ENCODE measurements at regions of chr5 and their contacts with region 1.

Region 1: GRCh38 chr5:171913987-171914273 is 92.5 kb downstream of the FBXW11 start:
- DNase-seq: no peak
- H3K4me3 Mint-ChIP-seq: no peak overlapping the region
- H3K27ac Mint-ChIP-seq: no peak overlapping the region
- H3K4me1 Mint-ChIP-seq: peaks cover 57% of the 10 kb centered on the region
- H3K27me3 Mint-ChIP-seq: no peaks in the 10 kb centered on the region

Region 2: DNA sequence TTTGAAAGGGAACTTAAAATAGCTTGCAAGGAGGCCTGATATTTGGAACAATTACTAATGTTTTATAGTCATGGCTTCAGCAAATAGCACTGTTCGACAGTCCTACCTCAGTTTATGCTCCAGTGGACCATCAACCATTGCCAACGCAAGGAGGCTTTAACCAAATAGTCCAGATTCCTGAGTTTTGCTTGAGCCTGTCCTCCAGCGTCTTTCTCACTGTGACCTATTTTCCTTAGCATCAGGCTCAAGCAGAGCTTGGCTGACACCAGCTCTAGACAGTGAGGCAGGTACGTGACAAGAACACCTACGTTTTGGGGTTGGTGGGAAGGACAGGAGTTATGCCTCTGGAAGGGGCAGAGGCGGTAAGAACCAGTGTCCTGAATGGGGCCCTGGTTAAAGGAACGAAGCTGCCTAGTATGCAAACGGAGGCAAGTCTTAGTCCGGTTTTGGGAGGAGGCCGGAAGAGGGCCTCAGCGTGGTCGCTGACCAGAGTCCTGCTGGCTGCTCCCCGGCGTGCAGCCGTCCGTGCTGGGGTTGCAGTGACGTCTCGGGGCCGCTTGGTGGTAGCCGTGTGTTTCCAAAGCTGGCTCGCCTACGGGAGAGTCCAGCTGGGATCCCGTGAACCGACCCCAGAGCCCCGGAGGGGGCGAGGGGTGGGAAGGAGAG is 495.5 kb before region 1 on chr5:
- CTCF ChIA-PET with region 1: interaction called, 10 read pairs
- intact Hi-C with region 1: no loop called
- DNase-seq: peak; percentile 71
- H3K4me3 Mint-ChIP-seq: peak overlapping the region; percentile 53
- H3K27ac Mint-ChIP-seq: no peak overlapping the region
- H3K4me1 Mint-ChIP-seq: peaks cover 13% of the 10 kb centered on the region
- H3K27me3 Mint-ChIP-seq: peaks cover 25% of the 10 kb centered on the region

Region 3: DNA sequence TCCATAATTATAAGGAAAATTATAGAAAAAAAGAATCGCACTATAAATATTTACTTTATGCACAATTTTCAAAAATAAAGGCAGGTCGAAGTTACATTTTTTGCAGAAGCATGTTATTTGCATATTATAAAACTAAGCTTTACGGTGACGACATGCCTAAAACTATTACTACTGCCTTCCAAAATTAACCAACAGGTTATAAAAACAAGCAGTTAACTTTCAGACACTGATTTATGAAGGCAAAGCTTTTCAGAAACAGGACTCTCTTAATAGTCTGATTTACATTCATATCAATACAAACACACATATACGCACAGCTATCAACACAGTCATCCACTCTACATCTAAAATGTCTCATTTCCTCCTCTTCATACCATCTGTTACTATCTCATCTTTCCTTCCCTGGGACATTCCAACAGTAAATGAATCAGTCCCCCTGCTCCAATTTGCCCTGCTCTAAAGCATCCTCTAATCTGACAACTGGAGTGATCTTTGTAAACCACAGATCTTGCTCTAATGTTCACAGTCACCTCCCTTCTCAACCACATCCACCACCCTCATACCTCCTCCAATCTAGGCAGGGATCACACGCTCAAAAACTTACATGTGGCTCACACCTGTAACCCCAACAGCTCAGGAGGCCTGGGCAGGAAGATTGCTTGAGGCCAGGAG is 71.0 kb after region 1 on chr5:
- CTCF ChIA-PET with region 1: interaction called, 13 read pairs
- intact Hi-C with region 1: no loop called
- DNase-seq: peak; percentile 63
- H3K4me3 Mint-ChIP-seq: no peak overlapping the region
- H3K27ac Mint-ChIP-seq: peak overlapping the region; percentile 50
- H3K4me1 Mint-ChIP-seq: peaks cover 55% of the 10 kb centered on the region
- H3K27me3 Mint-ChIP-seq: no peaks in the 10 kb centered on the region

Region 4: DNA sequence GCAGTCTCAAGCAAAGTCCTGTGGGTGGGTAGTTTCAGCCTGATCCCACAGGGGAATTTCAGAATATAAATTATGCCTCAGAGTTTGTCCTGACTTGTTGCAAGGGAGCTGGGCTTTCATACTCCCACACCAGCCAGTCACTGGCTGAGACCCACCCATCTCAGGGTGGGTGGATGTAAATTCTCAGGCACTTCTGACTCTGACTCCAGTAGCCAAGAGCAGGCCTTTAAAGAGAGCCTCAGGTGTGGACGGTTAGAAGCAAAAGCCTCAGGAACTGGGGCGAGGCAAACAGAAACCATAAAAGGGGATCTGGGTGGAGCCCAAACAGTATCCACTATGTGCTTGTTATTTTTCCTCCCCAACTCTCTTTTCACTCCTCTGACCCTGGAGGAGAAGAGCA is 121.1 kb after region 1 on chr5:
- CTCF ChIA-PET with region 1: interaction called, 75 read pairs
- intact Hi-C with region 1: loop called (anchors 1 kb)
- DNase-seq: no peak
- H3K4me3 Mint-ChIP-seq: no peak overlapping the region
- H3K27ac Mint-ChIP-seq: no peak overlapping the region
- H3K4me1 Mint-ChIP-seq: peaks cover 13% of the 10 kb centered on the region
- H3K27me3 Mint-ChIP-seq: no peaks in the 10 kb centered on the region

Region 5: DNA sequence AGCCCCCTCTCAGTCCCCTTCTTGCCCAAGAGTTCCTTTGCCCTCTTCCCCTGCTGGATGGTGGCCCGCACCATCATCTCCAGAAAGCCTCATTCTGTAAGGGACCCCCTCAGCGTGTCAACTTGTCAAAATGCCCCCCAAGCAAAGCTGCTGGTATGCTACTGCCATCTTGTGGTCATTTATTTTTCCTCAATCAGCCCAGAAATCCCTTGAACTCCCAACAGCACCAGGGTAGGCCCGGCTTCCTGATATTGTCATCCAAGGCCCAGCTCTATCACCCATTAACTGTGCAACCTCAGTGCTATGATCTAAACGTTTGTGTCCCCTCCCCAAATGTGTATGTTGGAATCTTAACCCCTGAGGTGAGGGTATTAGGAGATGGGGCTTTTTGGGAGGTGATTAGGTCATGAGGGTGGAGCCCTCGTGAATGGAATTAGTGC is 145.8 kb after region 1 on chr5:
- CTCF ChIA-PET with region 1: interaction called, 60 read pairs
- intact Hi-C with region 1: no loop called
- DNase-seq: no peak
- H3K4me3 Mint-ChIP-seq: no peak overlapping the region
- H3K27ac Mint-ChIP-seq: no peak overlapping the region
- H3K4me1 Mint-ChIP-seq: peaks cover 7% of the 10 kb centered on the region
- H3K27me3 Mint-ChIP-seq: no peaks in the 10 kb centered on the region

Measured in activated naive CD4-positive, alpha-beta T cell treated with anti-CD3 and anti-CD28 coated beads for 36 hours (primary cell).